Naive thymus-derived CD4-positive, alpha-beta T cell (primary cell): ENCODE measurements at regions of chr7 and their contacts with region 1.

Region 1: GRCh38 chr7:130010689-130011412 is 40.3 kb downstream of the ZC3HC1 start:
- DNase-seq: peak; percentile 71 to 88 (median 81)
- ATAC-seq: peak; percentile 88
- H3K4me3 ChIP-seq: no peak overlapping the region
- H3K4me3 Mint-ChIP-seq: no peak overlapping the region
- H3K27ac ChIP-seq: no peak overlapping the region
- H3K27ac Mint-ChIP-seq: peak overlapping the region in 2 of 9 donors; percentile 81 to 88
- H3K4me1 ChIP-seq: no peaks in the 10 kb centered on the region
- H3K4me1 Mint-ChIP-seq: peaks cover 0 to 9% (median 1%) of the 10 kb centered on the region in 7 donors
- H3K27me3 ChIP-seq: no peaks in the 10 kb centered on the region
- H3K27me3 Mint-ChIP-seq: no peaks in the 10 kb centered on the region

Region 2: DNA sequence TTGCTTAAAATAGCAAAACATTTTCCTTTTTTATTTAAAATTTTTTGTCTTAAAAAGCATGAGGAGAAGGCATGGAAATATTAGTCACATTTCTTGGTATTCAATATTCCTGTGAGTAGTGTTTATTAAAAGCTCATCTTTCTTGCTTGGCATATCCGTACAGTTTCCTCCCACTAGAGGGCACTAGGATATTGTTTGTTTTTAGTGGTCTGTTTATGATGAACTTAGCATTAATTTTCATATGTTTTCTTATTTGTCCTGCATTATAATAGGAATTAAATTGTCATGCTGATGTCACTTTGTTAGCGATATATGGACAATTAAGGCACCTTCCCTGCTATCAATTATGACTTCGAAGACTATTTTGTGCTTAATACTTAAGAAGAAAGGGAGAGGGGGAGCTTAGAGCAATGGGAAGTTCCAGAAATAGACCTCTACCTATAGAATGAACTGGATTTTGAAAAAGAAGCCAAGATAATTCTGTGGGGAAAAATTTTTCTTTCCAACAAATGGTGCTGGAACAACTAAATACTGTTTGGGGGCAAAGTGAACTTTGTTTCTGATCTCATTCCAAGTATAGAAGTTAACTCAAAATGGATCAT is 667.7 kb before region 1 on chr7:
- CTCF ChIA-PET with region 1: no interaction called
- POLR2A ChIA-PET with region 1: no interaction called
- intact Hi-C with region 1: loop called in 1 of 2 experiments (anchors 2 kb)
- DNase-seq: peak in 7 of 9 donors; percentile 7 to 37 (median 22)
- ATAC-seq: peak; percentile 61
- H3K4me3 ChIP-seq: no peak overlapping the region
- H3K4me3 Mint-ChIP-seq: no peak overlapping the region
- H3K27ac ChIP-seq: no peak overlapping the region
- H3K27ac Mint-ChIP-seq: no peak overlapping the region
- H3K4me1 ChIP-seq: no peaks in the 10 kb centered on the region
- H3K4me1 Mint-ChIP-seq: peaks cover 6 to 35% (median 19%) of the 10 kb centered on the region in 7 donors
- H3K27me3 ChIP-seq: no peaks in the 10 kb centered on the region
- H3K27me3 Mint-ChIP-seq: no peaks in the 10 kb centered on the region

Region 3: DNA sequence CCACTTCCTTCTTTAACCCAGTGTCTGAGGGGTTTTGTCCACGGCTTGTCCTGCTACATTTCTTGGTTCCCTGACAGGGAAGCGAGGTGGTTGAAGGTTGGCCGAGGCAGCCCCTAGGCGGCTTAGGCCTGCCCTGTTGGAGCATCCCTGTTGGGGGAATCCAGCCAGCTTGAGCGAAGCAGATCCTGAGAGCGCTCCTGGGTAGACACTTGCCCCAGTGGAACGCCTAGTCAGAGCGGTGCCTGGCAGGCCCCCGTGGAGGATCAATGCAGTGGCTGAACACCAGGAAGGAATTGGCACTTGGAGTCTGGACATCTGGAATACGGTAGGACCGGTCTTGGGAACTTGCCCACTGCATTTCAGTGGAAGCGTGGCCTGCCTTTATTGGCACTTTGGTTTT is 432.0 kb before region 1 on chr7:
- CTCF ChIA-PET with region 1: interaction called, 3 read pairs
- POLR2A ChIA-PET with region 1: no interaction called
- intact Hi-C with region 1: loop called in 1 of 2 experiments (anchors 1 kb)
- DNase-seq: no peak
- ATAC-seq: no peak
- H3K4me3 ChIP-seq: no peak overlapping the region
- H3K4me3 Mint-ChIP-seq: no peak overlapping the region
- H3K27ac ChIP-seq: no peak overlapping the region
- H3K27ac Mint-ChIP-seq: no peak overlapping the region
- H3K4me1 ChIP-seq: no peaks in the 10 kb centered on the region
- H3K4me1 Mint-ChIP-seq: no peaks in the 10 kb centered on the region
- H3K27me3 ChIP-seq: no peaks in the 10 kb centered on the region
- H3K27me3 Mint-ChIP-seq: peaks cover 0 to 8% (median 0%) of the 10 kb centered on the region in 5 donors

Region 4: GRCh38 chr7:129664029-129665012 is 346.5 kb before region 1 on chr7:
- CTCF ChIA-PET with region 1: no interaction called
- POLR2A ChIA-PET with region 1: no interaction called
- intact Hi-C with region 1: loop called (anchors 1 kb)
- DNase-seq: peak in 3 of 9 donors; percentile 1 to 2 (median 2)
- ATAC-seq: no peak
- H3K4me3 ChIP-seq: no peak overlapping the region
- H3K4me3 Mint-ChIP-seq: no peak overlapping the region
- H3K27ac ChIP-seq: no peak overlapping the region
- H3K27ac Mint-ChIP-seq: peak overlapping the region in 2 of 9 donors; percentile 1 to 2
- H3K4me1 ChIP-seq: no peaks in the 10 kb centered on the region
- H3K4me1 Mint-ChIP-seq: peaks cover 0 to 17% (median 10%) of the 10 kb centered on the region in 7 donors
- H3K27me3 ChIP-seq: no peaks in the 10 kb centered on the region
- H3K27me3 Mint-ChIP-seq: no peaks in the 10 kb centered on the region

Region 5: DNA sequence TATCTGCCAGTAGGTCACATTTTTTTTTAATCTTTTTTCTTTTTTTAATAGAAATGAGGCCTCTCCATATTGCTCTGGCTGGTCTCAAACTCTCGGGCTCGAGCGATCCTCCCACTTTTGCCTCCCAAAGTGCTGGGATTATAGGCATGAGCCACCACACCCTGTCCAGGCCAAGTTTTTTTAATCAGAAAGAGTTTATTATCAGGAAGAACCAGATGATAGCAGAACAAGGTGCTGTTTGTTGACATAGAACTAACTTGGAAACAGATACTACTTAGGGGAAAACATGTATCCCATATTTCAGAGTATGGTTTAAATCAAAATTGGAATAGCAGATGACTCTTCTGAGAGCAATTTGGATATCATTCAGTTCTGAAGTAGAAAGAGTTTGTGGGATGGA is 280.7 kb before region 1 on chr7:
- CTCF ChIA-PET with region 1: no interaction called
- POLR2A ChIA-PET with region 1: no interaction called
- intact Hi-C with region 1: loop called in 1 of 2 experiments (anchors 2 kb)
- DNase-seq: no peak
- ATAC-seq: no peak
- H3K4me3 ChIP-seq: no peak overlapping the region
- H3K4me3 Mint-ChIP-seq: no peak overlapping the region
- H3K27ac ChIP-seq: no peak overlapping the region
- H3K27ac Mint-ChIP-seq: no peak overlapping the region
- H3K4me1 ChIP-seq: no peaks in the 10 kb centered on the region
- H3K4me1 Mint-ChIP-seq: peaks cover 0 to 3% (median 0%) of the 10 kb centered on the region in 7 donors
- H3K27me3 ChIP-seq: no peaks in the 10 kb centered on the region
- H3K27me3 Mint-ChIP-seq: no peaks in the 10 kb centered on the region

Region 6: DNA sequence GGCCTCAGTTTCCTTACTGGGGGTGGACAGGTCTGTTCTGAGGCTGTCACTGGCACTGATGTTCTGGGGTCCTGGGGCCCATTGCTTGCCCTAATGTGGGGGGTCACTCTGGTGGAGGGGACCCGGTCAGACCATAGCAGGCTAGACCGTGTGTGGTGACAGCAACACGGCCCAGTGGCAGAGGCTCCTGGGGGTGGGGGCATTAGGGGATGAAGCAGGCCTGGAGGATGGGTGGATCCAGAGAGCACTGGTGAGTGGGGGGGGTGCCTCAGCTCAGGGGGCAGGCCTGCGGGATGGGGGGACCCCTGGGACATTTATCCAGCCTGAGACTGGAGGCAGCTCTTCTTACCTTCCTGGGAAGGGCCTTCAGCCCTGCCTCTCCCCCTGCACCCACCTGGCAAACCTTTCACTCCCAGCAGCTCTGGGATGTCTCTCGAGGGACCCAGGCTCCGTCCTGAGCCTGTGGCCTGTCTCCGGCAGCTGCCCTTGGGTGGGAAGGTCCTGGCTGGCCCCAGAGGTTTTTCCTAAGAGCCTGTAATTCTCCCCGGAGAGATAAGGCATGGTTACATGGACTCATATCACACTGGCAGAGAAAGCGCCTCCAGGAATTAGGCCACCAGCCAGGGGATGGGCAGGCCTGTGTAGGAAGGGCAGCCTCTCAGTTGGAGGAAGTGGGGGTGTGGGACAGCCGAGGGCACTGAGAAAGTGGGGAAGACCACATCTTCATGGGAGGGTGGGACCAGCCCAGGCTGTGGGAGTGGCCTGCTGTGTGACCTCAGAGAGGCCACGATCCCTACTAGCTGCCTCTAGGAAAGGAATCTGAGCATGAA is 205.7 kb before region 1 on chr7:
- CTCF ChIA-PET with region 1: no interaction called
- POLR2A ChIA-PET with region 1: no interaction called
- intact Hi-C with region 1: no loop called
- DNase-seq: no peak
- ATAC-seq: no peak
- H3K4me3 ChIP-seq: no peak overlapping the region
- H3K4me3 Mint-ChIP-seq: no peak overlapping the region
- H3K27ac ChIP-seq: no peak overlapping the region
- H3K27ac Mint-ChIP-seq: no peak overlapping the region
- H3K4me1 ChIP-seq: no peaks in the 10 kb centered on the region
- H3K4me1 Mint-ChIP-seq: no peaks in the 10 kb centered on the region
- H3K27me3 ChIP-seq: no peaks in the 10 kb centered on the region
- H3K27me3 Mint-ChIP-seq: peaks cover 0 to 3% (median 0%) of the 10 kb centered on the region in 5 donors

Region 7: GRCh38 chr7:129933627-129934026 is 77.2 kb before region 1 on chr7:
- CTCF ChIA-PET with region 1: no interaction called
- POLR2A ChIA-PET with region 1: no interaction called
- intact Hi-C with region 1: loop called in 1 of 2 experiments (anchors 2 kb)
- DNase-seq: no peak
- ATAC-seq: no peak
- H3K4me3 ChIP-seq: no peak overlapping the region
- H3K4me3 Mint-ChIP-seq: peak overlapping the region in 1 of 10 donors; percentile 5
- H3K27ac ChIP-seq: no peak overlapping the region
- H3K27ac Mint-ChIP-seq: peak overlapping the region in 1 of 9 donors; percentile 22
- H3K4me1 ChIP-seq: no peaks in the 10 kb centered on the region
- H3K4me1 Mint-ChIP-seq: peaks cover 0 to 34% (median 18%) of the 10 kb centered on the region in 7 donors
- H3K27me3 ChIP-seq: no peaks in the 10 kb centered on the region
- H3K27me3 Mint-ChIP-seq: no peaks in the 10 kb centered on the region